ENCODE measurements at regions of chr6 and their contacts with region 1.

Region 1: GRCh38 chr6:39302669-39303424 is 11.4 kb downstream of the KCNK17 start:
- DNase-seq: peak; percentile 96
- H3K4me3 Mint-ChIP-seq: peak overlapping the region; percentile 74
- H3K27ac Mint-ChIP-seq: no peak overlapping the region
- H3K4me1 Mint-ChIP-seq: peaks cover 8% of the 10 kb centered on the region
- H3K27me3 Mint-ChIP-seq: peaks cover 2% of the 10 kb centered on the region

Region 2: GRCh38 chr6:38973178-38974054 is 329.4 kb before region 1 on chr6:
- intact Hi-C with region 1: loop called (anchors 2 kb)
- DNase-seq: peak; percentile 74
- H3K4me3 Mint-ChIP-seq: no peak overlapping the region
- H3K27ac Mint-ChIP-seq: no peak overlapping the region
- H3K4me1 Mint-ChIP-seq: no peaks in the 10 kb centered on the region
- H3K27me3 Mint-ChIP-seq: peaks cover 45% of the 10 kb centered on the region

Region 3: DNA sequence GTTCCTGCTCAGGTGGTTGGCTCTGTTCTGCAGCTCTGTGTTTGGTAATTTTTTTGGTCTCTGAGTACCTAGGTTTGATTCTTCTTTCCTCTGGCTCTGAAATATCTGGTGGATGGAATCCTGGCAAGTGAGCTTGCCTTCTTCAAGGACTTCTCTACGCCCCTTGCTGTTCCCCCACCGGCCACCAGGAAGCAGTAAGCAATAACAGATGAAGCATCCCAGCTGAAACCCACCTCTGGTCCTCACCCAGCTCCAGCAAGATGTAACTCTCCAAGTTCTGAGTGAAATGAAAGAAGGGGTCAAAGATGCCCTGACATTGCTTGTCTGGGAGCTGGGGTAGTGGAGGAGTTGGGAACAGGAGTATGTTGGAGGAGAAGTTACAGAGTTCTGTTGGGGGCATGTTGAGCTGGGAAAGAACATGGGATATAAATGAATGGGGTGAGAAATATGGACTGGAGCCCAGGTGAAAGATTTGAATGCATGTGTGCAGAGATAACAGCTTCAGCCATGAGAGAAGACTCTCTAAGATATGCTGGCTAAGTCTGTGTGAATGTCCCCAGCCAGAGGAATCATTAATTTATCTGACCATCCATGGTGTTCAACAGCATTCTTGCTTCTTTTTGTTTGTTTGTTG is 305.6 kb before region 1 on chr6:
- intact Hi-C with region 1: loop called (anchors 5 kb)
- DNase-seq: peak; percentile 69
- H3K4me3 Mint-ChIP-seq: no peak overlapping the region
- H3K27ac Mint-ChIP-seq: no peak overlapping the region
- H3K4me1 Mint-ChIP-seq: no peaks in the 10 kb centered on the region
- H3K27me3 Mint-ChIP-seq: peaks cover 41% of the 10 kb centered on the region

Region 4: DNA sequence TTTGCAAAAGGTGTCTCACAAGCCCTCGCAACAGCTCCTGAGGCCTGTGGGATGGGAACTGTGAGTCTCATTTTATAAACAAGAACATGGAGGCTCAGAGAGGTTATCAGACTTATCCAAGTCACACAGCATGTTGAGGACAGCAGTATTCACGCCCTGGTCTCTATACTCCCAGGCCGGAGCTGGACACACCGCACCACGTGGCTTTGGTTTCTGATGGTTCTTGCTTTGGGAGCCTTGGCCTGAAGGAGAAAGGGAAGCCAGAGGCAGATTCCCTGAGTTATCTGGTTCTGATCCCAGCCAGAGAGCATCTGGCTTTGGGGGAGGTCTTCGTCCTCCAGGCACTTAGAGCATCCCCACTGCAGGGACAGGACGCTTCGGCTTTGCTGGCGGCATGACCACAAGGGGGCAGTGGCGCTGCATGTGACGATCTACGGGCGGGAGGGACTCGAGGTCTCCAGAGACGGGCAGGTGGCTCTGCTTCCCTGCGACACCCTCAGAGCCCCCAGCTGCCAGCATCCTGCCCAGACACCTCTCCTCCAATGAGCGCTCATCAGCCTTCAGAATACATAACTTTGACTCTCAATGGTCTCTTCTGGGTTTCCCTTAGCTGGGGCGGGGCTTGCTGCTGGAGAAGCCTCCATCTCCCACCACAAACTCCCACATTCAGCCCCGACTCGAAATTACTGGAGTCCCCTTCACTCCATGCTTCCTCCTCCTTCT is 136.5 kb before region 1 on chr6:
- intact Hi-C with region 1: loop called (anchors 1 kb)
- DNase-seq: peak; percentile 95
- H3K4me3 Mint-ChIP-seq: no peak overlapping the region
- H3K27ac Mint-ChIP-seq: no peak overlapping the region
- H3K4me1 Mint-ChIP-seq: peaks cover 8% of the 10 kb centered on the region
- H3K27me3 Mint-ChIP-seq: no peaks in the 10 kb centered on the region

Region 5: DNA sequence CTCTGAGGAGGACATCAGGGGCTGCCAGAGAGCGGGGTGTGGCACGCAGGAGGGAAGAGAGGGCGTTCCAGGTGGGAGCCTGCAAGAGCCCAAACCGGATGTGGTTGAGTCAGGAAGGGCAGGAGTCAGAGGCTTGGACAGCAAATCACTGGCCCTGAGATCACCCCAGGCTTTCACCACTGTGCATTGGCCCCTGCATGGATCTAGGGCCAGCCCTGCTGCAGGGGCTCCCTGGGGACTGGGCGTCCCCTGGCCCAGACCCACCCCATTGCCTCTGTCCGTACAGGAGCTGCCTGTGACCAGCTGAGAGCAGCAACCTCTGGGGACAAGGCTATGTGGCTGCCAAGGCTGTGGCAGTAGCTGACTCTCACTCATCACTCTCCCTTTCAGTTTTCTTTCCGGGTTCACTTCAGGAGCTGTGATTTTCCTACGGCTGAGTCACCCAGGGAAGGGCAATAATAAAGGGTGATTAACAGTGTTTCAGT is 22.6 kb before region 1 on chr6:
- intact Hi-C with region 1: no loop called
- DNase-seq: no peak
- H3K4me3 Mint-ChIP-seq: no peak overlapping the region
- H3K27ac Mint-ChIP-seq: no peak overlapping the region
- H3K4me1 Mint-ChIP-seq: no peaks in the 10 kb centered on the region
- H3K27me3 Mint-ChIP-seq: peaks cover 23% of the 10 kb centered on the region

Measured in activated CD4-positive, alpha-beta T cell treated with anti-CD3 and anti-CD28 coated beads, Interleukin-2, amount 10 ng/mL, durations not matched to agents 24 days and 14 days (primary cell).